ENCODE measurements at regions of chr12 and their contacts with region 1.

Region 1: GRCh38 chr12:114668151-114668885 is 15.7 kb downstream of the TBX3 start:
- DNase-seq: no peak
- H3K4me3 ChIP-seq: peak overlapping the region; percentile 12 to 60 (median 40)
- H3K27ac ChIP-seq: peak overlapping the region in 3 of 4 donors; percentile 8 to 35 (median 26)
- H3K4me1 ChIP-seq: peaks cover 5 to 46% (median 10%) of the 10 kb centered on the region in 3 donors
- H3K27me3 ChIP-seq: peaks cover 5 to 88% (median 23%) of the 10 kb centered on the region in 4 donors
- CTCF ChIP-seq: peak; percentile 40 to 77 (median 54)
- POLR2A ChIP-seq: no peak

Region 2: DNA sequence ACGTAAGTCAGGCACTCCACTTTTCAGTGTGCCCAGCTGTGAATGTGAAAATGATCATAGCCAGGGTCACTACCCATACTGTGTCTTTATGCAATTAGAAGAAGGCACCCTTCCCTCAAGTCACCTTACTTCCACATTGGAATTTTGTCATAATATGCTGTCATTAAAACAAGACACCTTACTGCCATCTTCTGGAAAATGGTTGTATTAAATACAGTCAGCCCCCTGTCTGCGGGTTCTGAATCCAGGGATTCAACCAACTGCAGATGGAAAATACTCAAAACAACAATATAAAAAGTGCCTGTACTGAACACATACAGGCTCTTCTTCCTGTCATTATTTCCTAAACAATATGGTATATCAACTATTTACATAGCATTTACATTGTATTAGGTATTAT is 192.2 kb before region 1 on chr12:
- intact Hi-C with region 1: no loop called
- DNase-seq: no peak
- H3K4me3 ChIP-seq: no peak overlapping the region
- H3K27ac ChIP-seq: no peak overlapping the region
- H3K4me1 ChIP-seq: peaks cover 0 to 18% (median 11%) of the 10 kb centered on the region in 3 donors
- H3K27me3 ChIP-seq: peaks cover 0 to 71% (median 15%) of the 10 kb centered on the region in 4 donors
- CTCF ChIP-seq: peak in 4 of 6 experiments; percentile 10 to 45 (median 28)
- POLR2A ChIP-seq: no peak

Region 3: DNA sequence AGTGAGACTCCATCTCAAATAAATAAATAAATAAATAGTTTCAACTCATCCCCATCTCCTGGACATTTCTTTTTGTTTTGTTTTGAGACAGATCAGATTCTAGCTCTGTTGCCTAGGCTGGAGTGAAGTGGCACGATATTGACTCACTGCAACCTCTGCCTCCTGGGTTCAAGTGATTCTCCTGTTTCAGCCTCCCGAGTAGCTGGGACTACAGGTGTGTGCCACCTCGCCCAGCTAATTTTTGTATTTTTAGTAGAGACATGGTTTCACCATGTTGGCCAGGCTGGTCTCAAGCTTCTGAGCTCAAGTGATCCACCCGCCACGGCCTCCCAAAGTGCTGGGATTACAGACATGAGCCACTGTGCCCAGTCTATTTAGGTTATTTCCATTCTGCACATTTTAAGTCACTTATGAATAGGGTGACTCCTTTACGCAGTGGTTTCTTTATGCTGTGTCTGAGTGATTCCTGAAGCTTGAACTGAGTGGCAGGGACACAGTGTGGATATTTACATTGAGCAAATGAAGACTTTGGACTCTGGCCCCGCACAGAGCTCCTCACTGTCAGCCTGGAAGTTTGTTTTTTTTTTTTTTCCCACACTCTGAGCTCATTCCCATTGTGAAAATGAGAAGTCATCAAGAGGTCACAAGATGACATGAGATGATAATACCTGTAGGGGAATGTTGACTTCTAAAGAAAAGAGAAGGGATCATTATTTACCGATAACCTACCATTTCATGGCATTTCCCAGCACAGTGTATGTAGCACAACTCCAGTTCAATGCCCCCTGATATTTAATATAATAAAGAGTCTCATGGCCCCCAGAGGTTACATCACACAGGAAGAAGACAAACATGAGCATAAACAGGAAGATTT is 56.9 kb before region 1 on chr12:
- intact Hi-C with region 1: no loop called
- DNase-seq: no peak
- H3K4me3 ChIP-seq: no peak overlapping the region
- H3K27ac ChIP-seq: no peak overlapping the region
- H3K4me1 ChIP-seq: no peaks in the 10 kb centered on the region
- H3K27me3 ChIP-seq: peaks cover 0 to 7% (median 0%) of the 10 kb centered on the region in 4 donors
- CTCF ChIP-seq: no peak
- POLR2A ChIP-seq: no peak

Region 4: GRCh38 chr12:114777052-114777451 is 108.7 kb after region 1 on chr12:
- intact Hi-C with region 1: no loop called
- DNase-seq: no peak
- H3K4me3 ChIP-seq: no peak overlapping the region
- H3K27ac ChIP-seq: no peak overlapping the region
- H3K4me1 ChIP-seq: no peaks in the 10 kb centered on the region
- H3K27me3 ChIP-seq: no peaks in the 10 kb centered on the region
- CTCF ChIP-seq: no peak
- POLR2A ChIP-seq: no peak

Region 5: GRCh38 chr12:115752913-115753726 is 1084.8 kb after region 1 on chr12:
- intact Hi-C with region 1: loop called (anchors 5 kb)
- DNase-seq: no peak
- H3K4me3 ChIP-seq: no peak overlapping the region
- H3K27ac ChIP-seq: no peak overlapping the region
- H3K4me1 ChIP-seq: no peaks in the 10 kb centered on the region
- H3K27me3 ChIP-seq: peaks cover 0 to 35% (median 0%) of the 10 kb centered on the region in 4 donors
- CTCF ChIP-seq: peak in 5 of 6 experiments; percentile 48 to 67 (median 52)
- POLR2A ChIP-seq: no peak

Region 6: GRCh38 chr12:115767916-115768315 is 1099.6 kb after region 1 on chr12:
- intact Hi-C with region 1: loop called (anchors 5 kb)
- DNase-seq: no peak
- H3K4me3 ChIP-seq: no peak overlapping the region
- H3K27ac ChIP-seq: no peak overlapping the region
- H3K4me1 ChIP-seq: no peaks in the 10 kb centered on the region
- H3K27me3 ChIP-seq: peaks cover 0 to 16% (median 0%) of the 10 kb centered on the region in 4 donors
- CTCF ChIP-seq: no peak
- POLR2A ChIP-seq: no peak

Measured in esophagus squamous epithelium (tissue), 5 donors.